ENCODE measurements at regions of chr9 and their contacts with region 1.

Region 1: GRCh38 chr9:110183208-110184145 is 24.5 kb downstream of the C9orf152 start:
- DNase-seq: peak; percentile 17 to 64
- H3K4me3 ChIP-seq: no peak overlapping the region
- H3K27ac ChIP-seq: no peak overlapping the region
- H3K4me1 ChIP-seq: no peaks in the 10 kb centered on the region
- H3K27me3 ChIP-seq: no peaks in the 10 kb centered on the region
- CTCF ChIP-seq: peak in 2 of 3 experiments; percentile 72 to 78; a peak in 3 of 4 replicates
- EP300 ChIP-seq: no peak
- POLR2A ChIP-seq: no peak
- RAD21 ChIP-seq: peak; percentile 94 to 95

Region 2: GRCh38 chr9:110069326-110070248 is 113.9 kb before region 1 on chr9:
- CTCF ChIA-PET with region 1: no interaction called
- POLR2A ChIA-PET with region 1: no interaction called
- DNase-seq: no peak
- H3K4me3 ChIP-seq: no peak overlapping the region
- H3K27ac ChIP-seq: no peak overlapping the region
- H3K4me1 ChIP-seq: peaks cover 2 to 8% (median 5%) of the 10 kb centered on the region in 4 experiments; a peak in 5 of 7 replicates
- H3K27me3 ChIP-seq: no peaks in the 10 kb centered on the region
- CTCF ChIP-seq: no peak
- EP300 ChIP-seq: no peak
- POLR2A ChIP-seq: no peak
- RAD21 ChIP-seq: no peak

Region 3: DNA sequence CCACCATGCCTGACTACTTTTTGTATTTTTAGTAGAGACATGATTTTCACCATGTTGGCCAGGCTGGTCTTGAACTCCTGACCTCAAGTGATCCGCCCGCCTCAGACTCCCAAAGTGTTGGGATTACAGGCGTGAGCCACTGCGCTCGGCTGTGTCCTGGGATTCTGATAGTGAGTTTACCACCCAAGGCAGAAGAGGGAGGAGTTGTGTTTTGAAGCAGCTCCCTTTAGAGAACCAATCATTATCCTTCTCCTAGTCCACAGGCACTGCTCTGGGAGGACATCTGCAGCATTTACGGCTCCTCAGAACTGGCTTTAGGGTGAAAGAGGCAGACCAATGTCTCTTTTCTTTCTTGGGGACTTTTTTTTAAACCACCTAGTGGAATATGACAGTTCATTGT is 18.8 kb after region 1 on chr9:
- CTCF ChIA-PET with region 1: interaction called, 33 read pairs
- POLR2A ChIA-PET with region 1: no interaction called
- DNase-seq: no peak
- H3K4me3 ChIP-seq: no peak overlapping the region
- H3K27ac ChIP-seq: no peak overlapping the region
- H3K4me1 ChIP-seq: peaks cover 0 to 2% (median 0%) of the 10 kb centered on the region in 4 experiments; a peak in 2 of 7 replicates
- H3K27me3 ChIP-seq: no peaks in the 10 kb centered on the region
- CTCF ChIP-seq: no peak
- EP300 ChIP-seq: no peak
- POLR2A ChIP-seq: no peak
- RAD21 ChIP-seq: no peak

Region 4: DNA sequence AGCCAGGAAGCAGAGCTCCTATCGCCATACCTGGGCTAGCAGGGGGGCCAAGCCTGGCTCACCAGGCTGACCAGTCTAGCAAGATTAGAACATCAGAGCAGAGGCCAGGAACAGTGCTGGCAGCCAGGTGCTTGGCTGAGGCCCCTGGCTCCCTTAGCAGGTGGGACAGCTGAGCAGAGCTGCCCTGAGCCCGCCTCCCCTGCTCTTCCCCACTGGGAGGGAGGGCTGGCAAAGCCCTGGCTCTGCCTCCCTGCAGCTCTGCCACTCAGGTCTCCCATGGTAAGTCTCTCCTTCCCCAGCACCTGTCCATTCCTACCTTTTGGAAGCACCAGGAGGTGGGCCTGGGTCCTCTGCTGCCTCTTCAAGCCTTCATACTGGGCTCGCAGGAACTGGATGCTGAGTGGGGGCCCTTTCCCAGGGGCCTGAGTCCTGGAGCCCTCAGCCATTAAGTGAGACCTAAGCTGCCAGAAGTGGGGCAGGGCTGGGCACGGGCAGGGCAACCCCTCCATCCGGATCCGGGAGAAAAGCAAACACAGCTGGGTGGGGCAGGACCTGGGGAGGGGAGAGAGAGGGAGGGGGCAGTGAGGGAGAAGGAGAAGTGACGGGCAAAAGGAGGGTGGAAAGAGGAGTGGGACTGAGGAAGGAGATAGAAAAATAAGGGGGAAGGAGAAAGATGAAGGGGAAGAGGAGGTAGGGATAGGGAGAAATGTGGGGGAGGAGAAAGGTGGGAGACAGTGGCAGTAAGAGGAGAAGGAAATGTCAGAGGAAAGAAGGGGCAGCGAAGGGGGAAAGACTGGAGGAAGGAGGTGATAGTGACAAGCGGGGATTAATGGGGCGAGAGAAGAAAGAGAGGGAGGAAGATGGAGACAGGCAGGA is 23.8 kb after region 1 on chr9:
- CTCF ChIA-PET with region 1: interaction called, 166 read pairs
- POLR2A ChIA-PET with region 1: no interaction called
- DNase-seq: no peak
- H3K4me3 ChIP-seq: no peak overlapping the region
- H3K27ac ChIP-seq: no peak overlapping the region
- H3K4me1 ChIP-seq: peaks cover 0 to 3% (median 0%) of the 10 kb centered on the region in 4 experiments; a peak in 2 of 7 replicates
- H3K27me3 ChIP-seq: no peaks in the 10 kb centered on the region
- CTCF ChIP-seq: no peak
- EP300 ChIP-seq: no peak
- POLR2A ChIP-seq: no peak
- RAD21 ChIP-seq: no peak

Region 5: GRCh38 chr9:110217656-110218099 is 34.2 kb after region 1 on chr9:
- CTCF ChIA-PET with region 1: interaction called, 166 read pairs
- POLR2A ChIA-PET with region 1: no interaction called
- DNase-seq: no peak
- H3K4me3 ChIP-seq: no peak overlapping the region
- H3K27ac ChIP-seq: no peak overlapping the region
- H3K4me1 ChIP-seq: no peaks in the 10 kb centered on the region
- H3K27me3 ChIP-seq: no peaks in the 10 kb centered on the region
- CTCF ChIP-seq: peak in 2 of 3 experiments; percentile 41 to 74; a peak in 2 of 4 replicates
- EP300 ChIP-seq: no peak
- POLR2A ChIP-seq: no peak
- RAD21 ChIP-seq: peak; percentile 46 to 61

Region 6: GRCh38 chr9:110623462-110624025 is 440.1 kb after region 1 on chr9:
- CTCF ChIA-PET with region 1: interaction called, 18 read pairs
- POLR2A ChIA-PET with region 1: no interaction called
- DNase-seq: peak in 1 of 2 experiments; percentile 51
- H3K4me3 ChIP-seq: no peak overlapping the region
- H3K27ac ChIP-seq: no peak overlapping the region
- H3K4me1 ChIP-seq: peaks cover 0 to 7% (median 0%) of the 10 kb centered on the region in 4 experiments; a peak in 1 of 7 replicates
- H3K27me3 ChIP-seq: no peaks in the 10 kb centered on the region
- CTCF ChIP-seq: peak in 2 of 3 experiments; percentile 48 to 68; a peak in 3 of 4 replicates
- EP300 ChIP-seq: no peak
- POLR2A ChIP-seq: no peak
- RAD21 ChIP-seq: peak; percentile 89 to 93